ENCODE measurements at regions of chr16 and their contacts with region 1.

Region 1: DNA sequence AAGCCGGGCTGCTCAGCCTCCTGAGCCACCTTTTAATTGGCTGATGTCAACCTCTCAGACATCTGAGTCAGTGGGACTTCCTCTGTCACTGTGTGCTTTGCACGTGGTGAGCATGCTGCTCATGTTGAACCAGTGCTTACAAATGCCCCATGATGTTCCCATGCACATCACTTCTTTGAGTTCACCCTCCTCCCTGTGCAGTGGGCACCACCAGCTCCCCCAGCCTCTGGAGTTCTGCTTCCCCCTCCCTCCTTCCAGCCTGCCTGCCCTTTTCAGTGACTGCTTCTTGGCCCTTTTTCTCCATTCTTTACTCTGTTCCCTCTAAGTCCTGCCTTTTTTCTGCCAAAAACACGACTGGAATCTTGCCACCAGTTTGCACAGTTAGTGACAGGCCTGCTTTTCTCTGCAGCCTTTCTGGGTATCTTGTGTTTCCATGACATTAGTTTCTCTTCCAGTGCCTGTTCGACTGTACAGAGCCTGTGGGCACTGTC is 41.6 kb downstream of the USP10 start:
- DNase-seq: no peak

Region 2: DNA sequence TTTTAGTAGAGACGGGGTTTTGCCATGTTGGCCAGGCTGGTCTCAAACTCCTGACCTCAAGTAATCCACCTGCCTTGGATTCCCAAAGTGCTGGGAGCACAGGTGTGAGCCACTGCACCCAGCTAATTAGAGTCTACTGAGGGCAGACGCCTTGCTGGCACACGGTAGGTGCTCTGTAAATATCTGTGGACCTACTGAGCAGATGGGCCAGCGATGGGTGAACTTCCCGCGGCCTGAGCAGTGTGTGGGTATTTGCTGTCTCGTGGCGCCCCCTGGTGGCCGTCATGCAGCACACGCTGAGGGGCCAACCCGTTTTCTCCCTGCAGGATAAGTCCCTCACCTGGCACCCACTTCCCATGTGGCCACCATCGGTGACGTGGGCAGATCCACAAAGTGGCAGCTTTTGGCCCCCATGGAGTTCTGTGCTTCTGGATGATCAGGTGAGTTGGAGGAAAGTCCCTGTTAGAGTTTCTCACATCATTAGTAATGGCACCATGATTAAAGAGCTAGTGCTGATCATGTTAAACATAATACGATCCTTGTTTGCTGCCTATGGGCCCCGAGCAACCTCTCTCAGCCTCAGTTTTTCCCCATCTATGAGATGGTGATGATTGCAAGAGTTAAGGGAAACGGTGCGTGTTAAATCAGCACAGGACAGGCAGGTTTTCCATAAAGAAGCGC is 229.2 kb after region 1 on chr16:
- in situ Hi-C with region 1: loop called (anchors 10 kb)
- DNase-seq: peak; percentile 66